ENCODE measurements at regions of chr6 and their contacts with region 1.

Region 1: GRCh38 chr6:33570806-33571636 is 9.1 kb downstream of the BAK1 start:
- DNase-seq: peak; percentile 91
- H3K4me3 Mint-ChIP-seq: peak overlapping the region; percentile 83
- H3K27ac Mint-ChIP-seq: peak overlapping the region; percentile 99
- H3K4me1 Mint-ChIP-seq: peaks cover 62% of the 10 kb centered on the region
- H3K27me3 Mint-ChIP-seq: no peaks in the 10 kb centered on the region

Region 2: DNA sequence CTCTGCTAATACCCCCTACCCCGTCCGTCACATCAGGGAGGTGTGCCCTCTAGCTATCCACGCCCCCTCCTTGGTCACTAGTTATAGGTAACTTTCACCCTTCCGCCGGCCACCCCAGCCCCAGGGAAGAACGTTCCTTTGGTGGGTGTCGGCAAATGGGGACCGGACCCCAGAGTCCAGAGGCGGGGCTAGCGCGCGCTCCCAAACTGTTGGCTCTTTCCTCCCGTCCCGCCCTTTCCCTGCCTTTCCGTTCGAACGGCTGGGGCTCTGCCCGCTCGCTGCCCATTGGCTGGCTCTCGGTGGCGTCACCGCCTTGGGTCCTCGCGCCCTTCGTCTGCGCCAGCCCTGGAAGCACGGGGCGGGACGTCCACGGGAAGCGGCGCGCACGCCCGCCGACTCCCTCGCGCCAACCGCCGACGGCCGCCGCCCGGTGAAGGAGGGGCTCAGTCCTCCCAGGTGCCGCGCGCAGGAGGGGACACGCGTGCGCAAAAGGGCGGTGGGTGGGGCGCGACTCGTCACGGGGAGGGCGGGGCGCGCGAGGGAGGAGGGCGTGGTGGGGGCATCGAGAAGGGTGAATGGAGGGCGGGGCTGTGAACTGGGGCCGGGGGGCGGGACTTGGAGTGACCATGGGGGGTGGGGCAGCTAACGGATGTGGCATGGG is 160.8 kb before region 1 on chr6:
- intact Hi-C with region 1: loop called (anchors 1 kb)
- DNase-seq: peak; percentile 99
- H3K4me3 Mint-ChIP-seq: peak overlapping the region; percentile 91
- H3K27ac Mint-ChIP-seq: peak overlapping the region; percentile 96
- H3K4me1 Mint-ChIP-seq: peaks cover 50% of the 10 kb centered on the region
- H3K27me3 Mint-ChIP-seq: no peaks in the 10 kb centered on the region

Region 3: GRCh38 chr6:33417903-33418689 is 152.9 kb before region 1 on chr6 and contains the start of gene CUTA:
- intact Hi-C with region 1: loop called (anchors 2 kb)
- DNase-seq: peak; percentile 98
- H3K4me3 Mint-ChIP-seq: peak within 1 kb of the TSS; percentile 95
- H3K27ac Mint-ChIP-seq: peak within 1 kb of the TSS; percentile 96
- H3K4me1 Mint-ChIP-seq: peaks cover 70% of the 10 kb centered on the region
- H3K27me3 Mint-ChIP-seq: no peaks in the 10 kb centered on the region
- total RNA-seq, gene CUTA: 131 and 137 TPM in 2 replicates

Region 4: DNA sequence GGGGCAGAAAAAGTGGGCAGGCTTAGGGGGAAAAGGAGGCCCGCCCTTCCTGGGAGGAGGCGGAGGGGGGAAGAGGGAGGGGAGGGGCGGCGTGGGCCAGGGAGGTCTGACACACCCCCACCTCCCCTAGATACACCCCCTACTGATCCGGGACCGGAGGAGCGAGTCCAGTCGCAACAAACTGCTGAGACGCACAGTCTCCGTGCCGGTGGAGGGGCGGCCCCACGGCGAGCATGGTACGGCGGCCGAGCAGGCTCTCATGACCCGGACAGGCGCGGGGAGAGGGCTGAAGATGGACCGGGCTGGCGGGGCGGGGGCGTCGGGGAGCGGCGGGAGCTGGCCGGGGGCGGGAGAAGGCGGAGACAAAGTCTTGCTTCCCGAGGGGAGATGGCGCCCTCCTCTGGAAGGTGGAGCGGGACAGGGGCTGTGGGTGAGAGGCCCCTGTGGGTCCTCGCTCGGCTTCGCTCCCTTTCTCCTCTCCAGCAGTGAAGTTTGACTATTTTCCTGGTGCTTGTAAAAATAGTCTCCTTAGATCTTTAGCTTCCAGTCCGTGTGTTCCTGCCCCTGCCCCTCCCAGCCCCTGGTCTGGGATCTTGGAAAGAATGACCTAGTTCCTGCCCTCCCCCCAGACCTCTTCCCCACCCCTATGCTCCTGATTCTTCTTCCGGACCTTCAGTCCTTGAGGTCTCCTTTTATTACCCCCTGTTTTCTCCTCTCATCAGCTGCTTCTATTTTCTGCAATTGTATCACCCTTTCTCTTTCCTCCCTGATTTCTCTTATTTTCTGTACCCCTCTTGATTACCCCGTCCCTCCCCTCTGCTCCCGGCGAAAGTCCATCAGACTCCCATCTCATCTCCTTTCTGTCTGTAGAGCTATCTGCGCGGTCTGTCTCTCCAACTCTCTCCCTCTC is 145.1 kb before region 1 on chr6:
- intact Hi-C with region 1: loop called (anchors 2 kb)
- DNase-seq: peak; percentile 72
- H3K4me3 Mint-ChIP-seq: peak overlapping the region; percentile 89
- H3K27ac Mint-ChIP-seq: peak overlapping the region; percentile 92
- H3K4me1 Mint-ChIP-seq: peaks cover 77% of the 10 kb centered on the region
- H3K27me3 Mint-ChIP-seq: no peaks in the 10 kb centered on the region

Region 5: GRCh38 chr6:33535104-33535603 is 35.9 kb before region 1 on chr6:
- intact Hi-C with region 1: loop called (anchors 1 kb)
- DNase-seq: no peak
- H3K4me3 Mint-ChIP-seq: no peak overlapping the region
- H3K27ac Mint-ChIP-seq: no peak overlapping the region
- H3K4me1 Mint-ChIP-seq: peaks cover 24% of the 10 kb centered on the region
- H3K27me3 Mint-ChIP-seq: no peaks in the 10 kb centered on the region

Region 6: DNA sequence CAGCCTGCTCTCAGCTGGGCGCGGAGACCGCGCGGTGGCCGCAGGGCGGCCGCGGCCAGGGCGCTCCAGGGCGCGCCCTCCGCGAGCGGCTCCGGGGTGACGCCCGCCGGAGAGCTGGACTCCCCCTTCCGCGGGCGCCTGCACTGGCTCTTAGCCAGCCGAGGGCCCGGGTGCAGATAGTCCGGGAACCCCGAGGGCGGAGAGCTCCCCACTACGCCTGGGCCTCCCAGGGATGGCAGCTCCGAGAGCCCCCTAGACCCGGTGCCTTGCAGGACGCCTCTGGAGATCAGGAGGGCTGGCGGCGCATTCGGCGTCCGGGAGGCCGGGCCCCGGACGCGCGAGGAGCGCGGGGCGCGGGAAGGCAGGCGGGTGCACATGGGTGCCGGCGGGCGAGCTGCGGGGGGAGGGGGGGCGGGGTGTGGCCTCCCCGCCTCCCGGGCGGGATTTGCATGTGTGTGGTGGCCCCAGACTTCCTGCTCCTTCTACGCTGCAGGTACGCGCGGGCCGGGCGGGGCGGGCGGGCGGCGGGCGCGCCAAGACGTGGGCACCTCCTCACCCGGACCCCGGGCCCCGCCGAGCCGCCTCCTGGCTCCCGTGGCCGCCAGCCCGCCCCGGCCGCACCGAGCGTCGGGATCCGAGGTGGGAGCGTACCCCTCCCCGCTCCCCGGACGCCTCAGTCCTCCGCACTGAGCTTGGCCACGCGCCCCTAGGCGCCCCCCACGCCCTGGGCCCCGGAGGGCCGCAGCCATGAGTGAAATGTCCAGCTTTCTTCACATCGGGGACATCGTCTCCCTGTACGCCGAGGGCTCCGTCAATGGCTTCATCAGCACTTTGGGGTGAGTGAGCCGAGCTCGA is 50.1 kb after region 1 on chr6 and contains the start of gene ITPR3:
- intact Hi-C with region 1: loop called (anchors 1 kb)
- DNase-seq: peak; percentile 68
- H3K4me3 Mint-ChIP-seq: peak within 1 kb of the TSS; percentile 96
- H3K27ac Mint-ChIP-seq: peak within 1 kb of the TSS; percentile 90
- H3K4me1 Mint-ChIP-seq: peaks cover 49% of the 10 kb centered on the region
- H3K27me3 Mint-ChIP-seq: no peaks in the 10 kb centered on the region
- total RNA-seq, gene ITPR3: 42.7 and 42.9 TPM in 2 replicates

Region 7: GRCh38 chr6:34236131-34236996 is 665.3 kb after region 1 on chr6 and contains the start of gene HMGA1:
- intact Hi-C with region 1: loop called (anchors 5 kb)
- DNase-seq: peak; percentile 83
- H3K4me3 Mint-ChIP-seq: peak within 1 kb of the TSS; percentile 86
- H3K27ac Mint-ChIP-seq: peak within 1 kb of the TSS; percentile 92
- H3K4me1 Mint-ChIP-seq: peaks cover 43% of the 10 kb centered on the region
- H3K27me3 Mint-ChIP-seq: no peaks in the 10 kb centered on the region
- total RNA-seq, gene HMGA1: 415 and 438 TPM in 2 replicates

Measured in activated T-helper 1 cell treated with anti-CD3 and anti-CD28 coated beads, Interleukin-12 subunit alpha, Interleukin-12 subunit beta, Interleukin-2, Interleukin-4 antibody, amounts not matched to agents 30 ng/mL and 10 ng/mL and 1 ng/mL, durations not matched to agents 14 hours and 24 hours and 36 hours (primary cell).